Activated B cell treated with CpG ODN at 0.5 μM for 24 hours (primary cell): ENCODE measurements at regions of chr16 and their contacts with region 1.

Region 1: DNA sequence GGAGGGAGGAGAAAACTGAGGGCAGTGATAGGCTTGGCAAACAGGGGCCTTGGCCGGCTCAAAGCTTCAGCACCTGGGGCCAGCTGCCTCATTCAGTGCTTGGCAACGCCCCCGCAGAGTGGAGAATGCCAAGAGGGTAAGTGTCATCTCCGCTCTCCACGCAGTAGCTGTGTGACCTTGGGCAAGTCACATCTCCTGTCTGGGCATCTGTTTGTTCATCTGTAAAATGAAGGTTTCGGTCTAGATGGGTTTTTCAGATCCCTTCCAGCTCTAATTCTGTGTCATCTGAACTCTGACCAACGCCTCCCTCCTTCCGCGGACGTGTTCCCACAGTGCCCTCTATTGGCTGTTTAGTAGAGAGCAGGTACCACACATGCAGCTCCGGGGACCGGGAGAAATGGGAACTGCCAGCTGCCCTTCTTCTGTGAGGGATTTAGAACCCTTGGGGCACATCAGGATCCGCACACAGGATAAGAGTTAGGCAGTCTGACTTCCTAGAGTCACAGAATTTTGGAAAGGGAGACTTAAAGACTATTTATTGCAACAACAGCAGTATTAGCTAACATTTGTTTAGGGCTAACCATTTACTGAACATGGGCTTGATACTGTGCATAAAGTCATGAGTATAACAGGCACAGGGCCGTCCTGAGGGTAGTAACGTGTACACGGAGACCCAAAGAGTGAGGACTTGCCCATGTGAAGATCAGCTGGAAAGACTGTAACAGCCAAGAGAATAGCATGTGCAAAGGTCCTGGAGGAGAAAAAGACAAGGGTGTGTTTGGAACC is 26.8 kb downstream of the GP2 start:
- DNase-seq: no peak
- ATAC-seq: no peak
- H3K4me3 Mint-ChIP-seq: no peak overlapping the region
- H3K27ac Mint-ChIP-seq: no peak overlapping the region
- H3K4me1 Mint-ChIP-seq: no peaks in the 10 kb centered on the region
- H3K27me3 Mint-ChIP-seq: no peaks in the 10 kb centered on the region
- CTCF ChIP-seq: no peak

Region 2: DNA sequence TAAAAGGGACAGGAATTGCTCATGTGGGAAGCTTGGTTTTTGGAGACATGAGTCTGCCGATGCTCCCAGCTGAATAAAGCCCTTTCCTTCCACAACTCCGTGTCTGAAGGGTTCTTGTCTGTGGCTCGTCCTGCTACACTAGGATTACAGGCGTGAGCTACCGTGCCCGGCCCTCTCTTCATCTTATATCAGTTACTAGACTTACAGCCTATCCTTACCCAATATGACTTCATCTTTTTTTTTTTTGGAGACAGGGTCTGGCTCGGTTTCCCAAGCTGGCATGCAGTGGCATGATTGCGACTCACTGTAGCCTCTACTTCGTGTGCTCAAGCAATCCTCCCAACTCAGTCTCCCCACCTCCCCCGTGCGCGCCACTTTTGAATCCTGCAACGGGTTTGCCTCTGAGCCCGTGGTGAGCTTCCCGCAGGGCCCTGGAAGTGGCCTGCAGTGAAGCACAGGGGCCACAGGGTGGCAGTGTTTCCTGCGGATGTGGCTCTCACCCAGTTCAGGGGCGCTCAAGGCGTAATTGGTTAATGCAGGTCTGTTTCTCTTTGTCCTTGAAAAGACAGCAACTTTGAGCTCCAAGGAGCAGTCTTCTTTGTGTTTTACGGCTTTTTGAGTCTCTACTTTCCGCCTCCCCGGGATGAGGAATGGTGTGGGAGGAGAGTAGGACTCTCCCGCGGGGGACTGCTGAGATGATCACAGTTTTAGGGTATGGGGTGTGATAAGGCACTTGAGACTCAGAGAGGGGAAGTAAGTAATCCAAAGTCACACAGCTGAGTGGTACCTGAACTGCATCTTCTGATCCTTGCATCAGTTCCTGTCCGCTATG is 393.1 kb before region 1 on chr16:
- CTCF ChIA-PET with region 1: interaction called, 10 read pairs
- POLR2A ChIA-PET with region 1: no interaction called
- intact Hi-C with region 1: no loop called
- DNase-seq: peak; percentile 29
- ATAC-seq: peak; percentile 86
- H3K4me3 Mint-ChIP-seq: no peak overlapping the region
- H3K27ac Mint-ChIP-seq: no peak overlapping the region
- H3K4me1 Mint-ChIP-seq: peaks cover 9% of the 10 kb centered on the region
- H3K27me3 Mint-ChIP-seq: peaks cover 21% of the 10 kb centered on the region
- CTCF ChIP-seq: no peak